ENCODE measurements at regions of chr10 and their contacts with region 1.

Region 1: GRCh38 chr10:89217057-89217990 is 10.2 kb upstream of the CH25H start:
- DNase-seq: no peak
- H3K4me3 ChIP-seq: no peak overlapping the region
- H3K27me3 ChIP-seq: no peaks in the 10 kb centered on the region
- CTCF ChIP-seq: peak; percentile 69

Region 2: DNA sequence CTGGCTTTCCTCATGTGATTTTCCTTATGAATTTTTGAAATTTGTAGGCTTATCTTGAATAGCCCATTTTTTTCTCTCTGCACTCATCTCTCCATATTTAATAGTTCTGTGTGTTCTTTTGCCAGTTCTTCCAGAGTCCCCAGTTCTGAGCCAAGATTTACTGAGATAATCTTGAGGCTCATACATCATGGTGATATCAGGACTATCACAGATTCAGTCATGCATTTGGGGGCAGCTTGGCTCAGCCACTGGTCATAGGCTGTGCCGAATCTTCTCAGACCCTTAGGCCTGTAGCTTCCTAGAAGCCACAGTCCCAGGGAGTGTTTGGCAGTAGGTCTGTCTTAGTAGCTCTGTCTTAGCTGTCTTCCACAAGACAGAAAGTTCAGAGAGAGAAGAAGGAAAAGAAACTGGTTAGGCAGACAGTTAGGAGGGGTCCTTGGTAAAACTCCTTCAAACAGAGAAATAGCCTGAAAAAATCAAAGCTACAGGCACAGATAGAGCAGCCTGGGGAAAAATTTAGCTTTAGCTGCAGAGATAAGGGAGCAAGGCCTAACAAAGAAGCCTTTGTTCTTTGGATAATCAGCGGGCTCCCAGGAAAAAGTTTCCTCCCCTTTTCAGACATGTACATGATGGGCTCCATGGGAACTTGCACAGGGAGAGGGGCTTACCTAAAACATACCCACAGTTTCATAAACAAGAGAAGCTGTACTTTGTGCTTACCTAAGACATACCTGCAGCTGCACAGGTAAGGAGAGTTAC is 197.6 kb before region 1 on chr10:
- CTCF ChIA-PET with region 1: interaction called, 15 read pairs
- POLR2A ChIA-PET with region 1: no interaction called
- DNase-seq: no peak
- H3K4me3 ChIP-seq: no peak overlapping the region
- H3K27me3 ChIP-seq: no peaks in the 10 kb centered on the region
- CTCF ChIP-seq: no peak

Region 3: DNA sequence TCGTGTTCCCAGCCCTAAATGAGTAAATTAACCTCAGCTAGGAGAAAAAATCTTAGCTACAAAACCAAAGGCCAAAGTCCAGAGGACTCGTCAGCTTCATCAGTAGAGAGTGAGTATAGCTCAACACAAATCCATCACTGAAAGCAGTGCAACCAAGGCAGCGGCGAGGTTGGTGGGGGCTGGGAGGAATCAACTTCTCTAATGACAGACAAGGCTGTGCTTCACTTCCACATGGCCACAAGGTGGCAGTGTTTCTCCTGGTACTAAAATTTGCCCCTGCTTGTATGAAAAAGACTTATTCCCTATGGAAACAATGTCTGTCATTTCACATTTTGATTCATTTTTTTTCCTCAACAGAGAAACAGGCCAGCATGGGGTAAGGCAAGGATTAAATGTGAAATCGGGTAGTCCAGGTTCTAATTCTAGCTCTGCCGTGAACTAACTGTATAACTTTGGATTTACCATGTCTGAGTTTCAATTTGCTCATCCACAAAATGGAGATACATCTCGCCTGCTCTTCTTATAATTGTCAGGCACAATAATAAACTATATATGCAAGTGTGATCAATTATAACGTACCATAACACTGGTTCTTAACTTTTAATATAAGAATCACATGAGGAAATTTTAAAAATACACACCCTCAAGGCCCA is 187.4 kb before region 1 on chr10:
- CTCF ChIA-PET with region 1: interaction called, 90 read pairs
- POLR2A ChIA-PET with region 1: no interaction called
- DNase-seq: peak; percentile 31
- H3K4me3 ChIP-seq: no peak overlapping the region
- H3K27me3 ChIP-seq: no peaks in the 10 kb centered on the region
- CTCF ChIP-seq: peak; percentile 75

Region 4: DNA sequence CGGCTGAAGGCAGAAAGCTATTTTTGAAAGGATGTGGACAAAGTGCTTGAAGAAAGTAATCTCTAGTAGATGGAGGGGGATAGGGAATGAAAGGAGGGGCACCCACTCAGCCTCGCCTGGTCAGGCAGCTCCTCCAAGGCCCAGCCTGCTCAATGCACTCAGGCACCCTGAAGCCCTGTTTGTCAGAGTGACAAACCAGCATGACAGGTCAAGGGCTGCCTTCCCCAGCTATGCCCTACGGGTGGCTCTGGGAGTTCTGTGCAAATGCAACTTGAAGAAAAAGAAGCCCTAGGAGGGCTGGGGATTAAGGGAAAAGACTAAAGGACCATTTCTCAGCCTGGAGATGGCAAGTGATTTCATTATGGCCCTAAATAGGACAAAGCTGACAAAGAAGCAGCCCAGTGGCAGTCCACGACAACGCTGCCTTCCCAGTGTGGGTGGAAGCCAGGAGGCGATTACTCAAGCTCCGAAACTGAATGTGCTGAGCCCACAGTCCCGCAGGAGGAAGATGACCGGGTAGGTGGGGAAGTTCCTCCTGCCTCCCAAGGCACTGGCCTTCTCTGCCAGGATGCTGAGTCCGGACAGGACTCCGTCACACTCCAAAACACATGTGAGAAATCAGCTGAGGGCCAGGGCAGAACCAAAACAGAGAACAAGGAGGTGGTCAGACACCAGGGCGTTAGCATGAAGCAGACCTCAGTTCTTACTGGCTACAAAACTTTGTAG is 17.9 kb after region 1 on chr10:
- CTCF ChIA-PET with region 1: interaction called, 12 read pairs
- POLR2A ChIA-PET with region 1: no interaction called
- DNase-seq: no peak
- H3K4me3 ChIP-seq: no peak overlapping the region
- H3K27me3 ChIP-seq: no peaks in the 10 kb centered on the region
- CTCF ChIP-seq: no peak

Region 5: GRCh38 chr10:89327784-89328441 is 110.6 kb after region 1 on chr10 and contains the start of gene IFIT3:
- CTCF ChIA-PET with region 1: no interaction called
- POLR2A ChIA-PET with region 1: no interaction called
- DNase-seq: peak; percentile 86
- H3K4me3 ChIP-seq: peak within 1 kb of the TSS; percentile 49
- H3K27me3 ChIP-seq: no peaks in the 10 kb centered on the region
- CTCF ChIP-seq: 0 out of 2 replicates have a peak, but pooled peaks have one; percentile 5
- polyA plus RNA-seq, gene IFIT3: 18.7 and 25.8 TPM in 2 replicates